GM12878 (cell line): ENCODE measurements at regions of chr3 and their contacts with region 1.

Region 1: DNA sequence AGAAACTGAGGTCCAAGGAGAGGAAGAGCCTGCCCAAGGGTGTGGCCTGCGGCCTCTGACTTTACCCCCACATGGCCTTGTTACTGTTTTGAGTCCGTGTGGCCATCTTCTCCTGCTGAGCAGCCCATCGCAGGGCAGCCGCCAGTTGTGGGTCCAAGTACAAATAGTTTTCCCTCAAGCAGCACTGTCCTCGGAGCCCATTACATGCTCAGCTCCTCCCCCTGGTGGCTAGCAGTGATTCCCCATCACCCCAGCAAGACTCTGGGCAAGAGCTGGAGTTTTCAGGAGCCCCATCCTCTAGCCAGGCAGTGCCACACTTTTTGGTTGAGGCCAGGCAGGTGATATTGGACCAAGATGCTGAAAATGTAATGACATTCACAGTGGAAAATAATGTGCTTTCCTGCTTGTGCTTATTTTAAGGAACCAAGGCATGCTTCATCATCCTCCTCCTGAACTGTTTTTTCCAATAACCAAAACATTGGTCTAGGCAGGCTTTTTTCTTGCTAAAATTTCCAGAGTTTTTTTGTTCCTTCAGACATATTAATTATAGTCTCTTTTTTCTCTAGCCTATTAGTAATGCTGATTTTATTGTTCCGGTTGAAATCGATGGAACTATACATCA is 23.2 kb upstream of the VILL start:
- DNase-seq: no peak
- ATAC-seq: peak; percentile 97
- H3K4me3 ChIP-seq: no peak overlapping the region
- H3K27ac ChIP-seq: no peak overlapping the region
- H3K4me1 ChIP-seq: no peaks in the 10 kb centered on the region
- H3K27me3 ChIP-seq: no peaks in the 10 kb centered on the region
- CTCF ChIP-seq: peak; percentile 84 to 94 (median 90)
- EP300 ChIP-seq: no peak
- POLR2A ChIP-seq: no peak
- RAD21 ChIP-seq: peak; percentile 81

Region 2: DNA sequence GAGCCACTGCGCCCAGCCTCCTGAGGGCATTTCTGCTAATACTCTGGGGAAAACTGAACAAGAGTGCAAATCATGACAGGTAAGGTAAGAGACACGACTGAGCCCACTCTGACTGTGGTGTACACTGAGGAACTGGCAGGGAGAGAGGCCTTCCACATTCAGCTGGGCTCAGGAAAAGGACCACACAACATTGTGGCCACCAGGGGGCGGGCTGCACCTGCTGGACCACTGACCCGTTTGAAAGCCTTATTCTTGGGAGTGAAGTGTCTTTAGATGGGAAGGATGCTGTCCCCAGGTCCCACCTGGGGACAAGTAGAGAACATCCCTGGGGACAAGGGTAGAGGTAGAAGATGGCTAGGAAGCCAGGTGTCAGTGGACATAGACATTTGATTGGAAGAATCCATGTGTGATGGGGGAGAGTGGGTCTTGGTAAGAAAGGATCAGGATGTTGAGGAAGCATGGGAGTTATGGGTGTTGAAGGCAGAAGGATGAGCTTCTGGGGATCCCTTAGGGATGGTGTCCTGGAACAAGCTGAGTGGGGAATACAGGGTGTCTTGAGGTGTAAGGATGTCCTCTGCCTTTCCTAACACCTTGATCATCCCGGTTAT is 111.9 kb before region 1 on chr3:
- CTCF ChIA-PET with region 1: no interaction called
- POLR2A ChIA-PET with region 1: no interaction called
- RAD21 ChIA-PET with region 1: interaction called, 111 read pairs
- SMC1A ChIA-PET with region 1: interaction called, 9 read pairs
- in situ Hi-C with region 1: loop called (anchors 5 kb)
- intact Hi-C with region 1: loop called (anchors 1 kb)
- DNase-seq: peak; percentile 5
- ATAC-seq: peak; percentile 91
- H3K4me3 ChIP-seq: no peak overlapping the region
- H3K27ac ChIP-seq: no peak overlapping the region
- H3K4me1 ChIP-seq: no peaks in the 10 kb centered on the region
- H3K27me3 ChIP-seq: peaks cover 0 to 4% of the 10 kb centered on the region in 2 experiments; a peak in 2 of 4 replicates
- CTCF ChIP-seq: peak; percentile 89 to 98 (median 89)
- EP300 ChIP-seq: no peak
- POLR2A ChIP-seq: no peak
- RAD21 ChIP-seq: peak; percentile 94

Region 3: GRCh38 chr3:37863939-37864822 is 103.2 kb before region 1 on chr3:
- CTCF ChIA-PET with region 1: interaction called, 12 read pairs
- POLR2A ChIA-PET with region 1: no interaction called
- RAD21 ChIA-PET with region 1: interaction called, 6 read pairs
- SMC1A ChIA-PET with region 1: interaction called, 3 read pairs
- in situ Hi-C with region 1: loop called (anchors 5 kb)
- intact Hi-C with region 1: no loop called
- DNase-seq: no peak
- ATAC-seq: no peak
- H3K4me3 ChIP-seq: no peak overlapping the region
- H3K27ac ChIP-seq: no peak overlapping the region
- H3K4me1 ChIP-seq: no peaks in the 10 kb centered on the region
- H3K27me3 ChIP-seq: peaks cover 7 to 13% of the 10 kb centered on the region in 2 experiments; a peak in 3 of 4 replicates
- CTCF ChIP-seq: no peak
- EP300 ChIP-seq: no peak
- POLR2A ChIP-seq: no peak
- RAD21 ChIP-seq: no peak

Region 4: GRCh38 chr3:37907906-37908305 is 59.5 kb before region 1 on chr3:
- CTCF ChIA-PET with region 1: interaction called, 11 read pairs
- POLR2A ChIA-PET with region 1: no interaction called
- RAD21 ChIA-PET with region 1: interaction called, 5 read pairs
- SMC1A ChIA-PET with region 1: interaction called, 6 read pairs
- in situ Hi-C with region 1: no loop called
- intact Hi-C with region 1: no loop called
- DNase-seq: peak; percentile 84
- ATAC-seq: peak; percentile 92
- H3K4me3 ChIP-seq: no peak overlapping the region
- H3K27ac ChIP-seq: peak overlapping the region; percentile 20; the same call in 1 of the 2 replicates
- H3K4me1 ChIP-seq: peaks cover 29% of the 10 kb centered on the region
- H3K27me3 ChIP-seq: no peaks in the 10 kb centered on the region
- CTCF ChIP-seq: no peak
- EP300 ChIP-seq: peak; percentile 95 to 97
- POLR2A ChIP-seq: no peak
- RAD21 ChIP-seq: no peak; the same call in 1 of the 2 replicates

Region 5: DNA sequence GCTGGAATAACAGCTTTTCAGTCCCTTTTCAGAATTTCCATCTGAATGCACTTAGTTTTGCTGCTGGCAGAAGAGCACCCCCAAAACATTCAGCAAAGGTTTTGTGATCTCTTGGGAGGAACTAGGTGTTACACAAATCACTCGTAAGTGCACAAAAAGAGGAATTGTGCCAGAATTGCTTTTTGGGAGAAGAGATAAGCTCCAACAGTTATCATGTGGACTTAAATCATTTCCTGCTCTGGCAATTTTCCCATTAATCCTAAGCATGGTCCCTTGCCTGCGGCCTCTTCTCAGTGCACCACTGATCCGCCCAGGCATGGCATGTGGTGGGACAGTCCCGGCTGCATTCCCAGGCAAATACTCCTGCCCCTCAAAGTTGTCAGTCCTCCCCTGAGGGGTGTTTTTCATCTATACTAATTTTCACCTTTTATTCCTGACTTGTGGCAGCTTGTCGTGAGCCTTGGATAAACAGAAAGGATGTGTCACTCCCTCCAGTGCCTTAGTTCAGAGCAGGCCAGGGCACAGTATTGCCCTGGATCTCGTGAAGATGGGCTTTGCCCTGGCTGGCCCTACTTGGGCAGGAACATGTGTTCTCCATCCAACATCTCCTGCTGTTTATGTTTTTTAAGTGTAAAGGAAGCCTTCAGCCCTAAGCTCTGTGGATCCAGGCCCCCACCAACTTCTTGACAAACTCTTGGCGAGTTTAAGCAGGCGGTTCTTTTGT is 21.4 kb before region 1 on chr3:
- CTCF ChIA-PET with region 1: interaction called, 12 read pairs
- POLR2A ChIA-PET with region 1: no interaction called
- RAD21 ChIA-PET with region 1: interaction called, 3 read pairs
- SMC1A ChIA-PET with region 1: no interaction called
- in situ Hi-C with region 1: no loop called
- intact Hi-C with region 1: no loop called
- DNase-seq: no peak
- ATAC-seq: no peak
- H3K4me3 ChIP-seq: no peak overlapping the region
- H3K27ac ChIP-seq: no peak overlapping the region
- H3K4me1 ChIP-seq: no peaks in the 10 kb centered on the region
- H3K27me3 ChIP-seq: peaks cover 0 to 2% of the 10 kb centered on the region in 2 experiments; a peak in 1 of 4 replicates
- CTCF ChIP-seq: no peak
- EP300 ChIP-seq: no peak
- POLR2A ChIP-seq: no peak
- RAD21 ChIP-seq: no peak

Region 6: DNA sequence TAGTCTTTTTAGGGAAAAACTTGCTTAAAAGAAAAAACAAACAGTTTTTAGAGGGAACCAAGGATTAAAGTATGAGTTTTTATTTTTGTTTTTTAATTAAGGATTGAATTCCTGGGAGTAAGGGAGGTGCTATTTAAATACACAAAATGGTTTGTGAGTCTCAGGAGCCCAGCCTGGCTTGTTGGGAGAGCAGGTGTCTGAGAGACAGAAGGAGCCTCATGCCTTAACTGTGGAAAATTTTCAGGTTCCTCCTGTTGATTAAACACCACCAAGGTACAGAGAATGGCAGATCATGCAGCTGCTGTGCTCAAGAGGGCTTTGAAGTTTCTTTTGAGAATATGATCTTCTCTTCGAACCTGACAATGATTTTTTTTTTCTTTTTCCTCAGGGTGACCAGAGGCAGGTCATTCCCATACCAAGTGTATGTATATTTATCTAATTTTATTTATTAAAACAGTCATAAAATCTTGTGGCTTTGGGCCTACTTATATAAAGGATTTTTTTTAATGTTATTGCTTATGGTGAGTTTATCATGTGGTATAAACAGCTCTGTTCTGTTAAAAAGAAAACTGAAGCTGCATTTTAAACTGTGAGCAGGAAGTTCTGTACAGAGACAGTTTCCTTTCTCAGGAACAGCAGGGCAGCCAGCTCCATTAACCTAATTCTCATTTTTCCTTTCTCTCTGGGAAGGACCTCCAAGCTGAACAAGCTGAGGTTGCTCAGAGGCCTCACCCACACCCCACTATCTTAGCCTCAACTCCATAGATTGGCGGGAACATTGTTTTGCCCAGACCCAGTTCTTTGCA is 10.4 kb before region 1 on chr3:
- CTCF ChIA-PET with region 1: interaction called, 41 read pairs
- POLR2A ChIA-PET with region 1: no interaction called
- RAD21 ChIA-PET with region 1: no interaction called
- SMC1A ChIA-PET with region 1: interaction called, 5 read pairs
- in situ Hi-C with region 1: no loop called
- intact Hi-C with region 1: no loop called
- DNase-seq: no peak
- ATAC-seq: no peak; the same call in 2 of the 3 replicates
- H3K4me3 ChIP-seq: no peak overlapping the region
- H3K27ac ChIP-seq: 0 out of 2 replicates have a peak overlapping the region, but pooled peaks have one; percentile 8
- H3K4me1 ChIP-seq: peaks cover 3% of the 10 kb centered on the region
- H3K27me3 ChIP-seq: no peaks in the 10 kb centered on the region; a peak in 1 of 4 replicates
- CTCF ChIP-seq: no peak
- EP300 ChIP-seq: no peak
- POLR2A ChIP-seq: no peak
- RAD21 ChIP-seq: no peak

Region 7: DNA sequence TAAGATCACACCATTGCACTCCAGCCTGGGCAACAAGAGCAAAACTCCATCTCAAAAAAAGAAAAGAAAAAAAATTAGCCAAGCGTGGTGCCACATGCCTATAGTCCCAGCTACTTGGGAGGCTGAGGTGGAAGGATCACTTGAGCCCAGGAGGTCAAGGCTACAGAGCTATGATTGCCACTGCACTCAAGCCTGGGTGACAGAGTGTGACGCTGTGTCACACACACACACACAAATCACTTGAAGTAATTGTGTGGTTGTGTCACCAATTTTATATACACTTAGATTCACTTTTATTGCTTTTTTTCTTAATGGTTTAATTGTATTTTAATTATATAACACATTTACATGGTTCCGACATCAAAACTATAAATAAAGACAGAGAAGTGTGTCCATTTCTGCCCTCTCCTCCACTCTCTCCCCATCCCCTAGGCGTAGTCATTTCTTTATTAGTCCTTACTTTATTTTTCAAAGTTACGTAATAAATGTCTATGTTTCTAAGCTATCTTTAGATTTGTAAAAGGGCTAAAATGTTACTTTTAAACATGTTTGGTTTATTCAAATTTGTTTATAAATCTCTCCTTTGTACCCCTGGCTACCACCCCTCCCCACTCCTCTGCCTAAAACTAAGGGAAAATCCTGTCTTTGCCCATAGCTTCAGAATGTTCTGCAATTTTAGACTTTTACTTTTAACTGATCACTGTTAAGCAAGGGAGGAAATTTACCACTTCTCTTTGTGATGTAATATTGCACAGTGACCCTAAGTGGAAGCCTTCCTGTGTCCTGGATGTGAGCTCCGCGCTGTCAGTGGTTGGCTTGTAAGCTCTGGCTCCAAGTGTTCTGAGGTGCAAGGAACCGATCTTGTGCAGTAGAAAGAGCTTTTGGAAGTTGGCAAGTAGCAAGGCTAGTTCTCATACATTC is 12.4 kb after region 1 on chr3:
- CTCF ChIA-PET with region 1: interaction called, 38 read pairs
- POLR2A ChIA-PET with region 1: no interaction called
- RAD21 ChIA-PET with region 1: interaction called, 7 read pairs
- SMC1A ChIA-PET with region 1: interaction called, 6 read pairs
- in situ Hi-C with region 1: no loop called
- intact Hi-C with region 1: no loop called
- DNase-seq: no peak
- ATAC-seq: no peak
- H3K4me3 ChIP-seq: no peak overlapping the region
- H3K27ac ChIP-seq: no peak overlapping the region
- H3K4me1 ChIP-seq: no peaks in the 10 kb centered on the region
- H3K27me3 ChIP-seq: no peaks in the 10 kb centered on the region; a peak in 2 of 4 replicates
- CTCF ChIP-seq: no peak
- EP300 ChIP-seq: no peak
- POLR2A ChIP-seq: no peak
- RAD21 ChIP-seq: no peak

Region 8: GRCh38 chr3:38878646-38879045 is 911.3 kb after region 1 on chr3:
- CTCF ChIA-PET with region 1: no interaction called
- POLR2A ChIA-PET with region 1: no interaction called
- RAD21 ChIA-PET with region 1: no interaction called
- SMC1A ChIA-PET with region 1: no interaction called
- in situ Hi-C with region 1: no loop called
- intact Hi-C with region 1: no loop called
- DNase-seq: no peak
- ATAC-seq: no peak
- H3K4me3 ChIP-seq: no peak overlapping the region
- H3K27ac ChIP-seq: no peak overlapping the region
- H3K4me1 ChIP-seq: no peaks in the 10 kb centered on the region
- H3K27me3 ChIP-seq: no peaks in the 10 kb centered on the region
- CTCF ChIP-seq: no peak
- EP300 ChIP-seq: no peak
- POLR2A ChIP-seq: no peak
- RAD21 ChIP-seq: no peak